ENCODE measurements at regions of chr11 and their contacts with region 1.

Region 1: DNA sequence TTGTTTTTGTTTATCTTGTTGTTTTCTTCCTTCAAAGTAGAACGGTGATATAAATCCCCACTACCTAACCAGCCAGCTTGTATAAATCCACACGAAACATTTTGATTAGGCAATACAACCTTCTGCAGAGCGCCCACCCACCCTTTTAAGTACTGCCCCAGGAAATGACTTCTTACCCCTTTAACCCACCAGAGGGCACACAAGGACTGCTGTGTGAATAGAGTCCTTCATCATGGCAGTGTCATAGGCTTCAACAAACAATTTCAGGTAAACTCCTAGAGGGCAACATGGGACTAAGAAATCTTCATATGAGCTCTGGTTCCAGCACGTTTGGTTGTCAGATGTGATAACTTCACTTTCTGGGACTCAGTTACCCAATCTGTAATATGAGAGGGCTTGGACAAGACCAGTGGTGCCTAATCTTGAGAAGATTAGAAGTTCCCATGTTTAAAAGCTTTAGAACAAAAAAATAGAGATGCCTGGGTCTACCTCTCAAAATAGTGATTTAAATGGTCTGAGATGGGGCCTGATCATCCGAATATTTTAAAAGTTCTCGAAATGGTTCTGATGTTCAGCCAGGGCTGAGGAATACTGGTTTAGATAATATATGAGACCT is 56.1 kb downstream of the PIWIL4 start:
- DNase-seq: peak; percentile 22
- H3K4me3 ChIP-seq: no peak overlapping the region
- H3K27ac ChIP-seq: no peak overlapping the region
- H3K4me1 ChIP-seq: no peaks in the 10 kb centered on the region
- H3K27me3 ChIP-seq: no peaks in the 10 kb centered on the region
- CTCF ChIP-seq: peak; percentile 57 to 65 (median 62)
- EP300 ChIP-seq: no peak
- POLR2A ChIP-seq: no peak

Region 2: GRCh38 chr11:94897330-94897768 is 274.1 kb after region 1 on chr11:
- in situ Hi-C with region 1: loop called (anchors 10 to 25 kb)
- intact Hi-C with region 1: no loop called
- DNase-seq: peak; percentile 47
- H3K4me3 ChIP-seq: no peak overlapping the region
- H3K27ac ChIP-seq: no peak overlapping the region
- H3K4me1 ChIP-seq: no peaks in the 10 kb centered on the region
- H3K27me3 ChIP-seq: no peaks in the 10 kb centered on the region
- CTCF ChIP-seq: peak; percentile 64 to 89 (median 84)
- EP300 ChIP-seq: no peak
- POLR2A ChIP-seq: no peak